ENCODE measurements at regions of chr13 and their contacts with region 1.

Region 1: GRCh38 chr13:51895906-51896888 is 34.4 kb downstream of the CCDC70 start:
- DNase-seq: peak; percentile 66
- H3K4me3 Mint-ChIP-seq: no peak overlapping the region
- H3K27ac Mint-ChIP-seq: no peak overlapping the region
- H3K4me1 Mint-ChIP-seq: no peaks in the 10 kb centered on the region
- H3K27me3 Mint-ChIP-seq: peaks cover 12% of the 10 kb centered on the region

Region 2: DNA sequence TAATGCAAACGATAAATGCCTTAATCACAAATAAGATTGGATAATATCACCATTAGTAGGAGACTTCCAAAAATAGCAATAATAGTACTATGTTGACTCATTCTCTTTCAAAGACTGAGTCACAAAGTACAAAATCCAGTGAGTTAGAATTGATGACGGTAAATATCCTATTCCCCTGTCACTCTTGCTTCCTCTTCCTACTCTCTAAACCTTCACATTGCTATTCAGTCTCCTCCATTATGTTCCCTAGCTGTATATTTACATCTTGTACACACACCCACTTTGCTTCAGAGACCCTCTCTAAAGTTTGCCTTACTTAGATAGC is 417.0 kb before region 1 on chr13:
- CTCF ChIA-PET with region 1: no interaction called
- POLR2A ChIA-PET with region 1: no interaction called
- intact Hi-C with region 1: no loop called
- DNase-seq: no peak
- H3K4me3 Mint-ChIP-seq: no peak overlapping the region
- H3K27ac Mint-ChIP-seq: no peak overlapping the region
- H3K4me1 Mint-ChIP-seq: peaks cover 5% of the 10 kb centered on the region
- H3K27me3 Mint-ChIP-seq: no peaks in the 10 kb centered on the region

Region 3: GRCh38 chr13:51923983-51924539 is 27.9 kb after region 1 on chr13:
- CTCF ChIA-PET with region 1: interaction called, 11 read pairs
- POLR2A ChIA-PET with region 1: no interaction called
- intact Hi-C with region 1: no loop called
- DNase-seq: peak; percentile 30
- H3K4me3 Mint-ChIP-seq: no peak overlapping the region
- H3K27ac Mint-ChIP-seq: no peak overlapping the region
- H3K4me1 Mint-ChIP-seq: peaks cover 21% of the 10 kb centered on the region
- H3K27me3 Mint-ChIP-seq: peaks cover 8% of the 10 kb centered on the region

Region 4: GRCh38 chr13:51978796-51979556 is 82.8 kb after region 1 on chr13:
- CTCF ChIA-PET with region 1: no interaction called
- POLR2A ChIA-PET with region 1: no interaction called
- intact Hi-C with region 1: no loop called
- DNase-seq: no peak
- H3K4me3 Mint-ChIP-seq: no peak overlapping the region
- H3K27ac Mint-ChIP-seq: no peak overlapping the region
- H3K4me1 Mint-ChIP-seq: no peaks in the 10 kb centered on the region
- H3K27me3 Mint-ChIP-seq: no peaks in the 10 kb centered on the region

Region 5: DNA sequence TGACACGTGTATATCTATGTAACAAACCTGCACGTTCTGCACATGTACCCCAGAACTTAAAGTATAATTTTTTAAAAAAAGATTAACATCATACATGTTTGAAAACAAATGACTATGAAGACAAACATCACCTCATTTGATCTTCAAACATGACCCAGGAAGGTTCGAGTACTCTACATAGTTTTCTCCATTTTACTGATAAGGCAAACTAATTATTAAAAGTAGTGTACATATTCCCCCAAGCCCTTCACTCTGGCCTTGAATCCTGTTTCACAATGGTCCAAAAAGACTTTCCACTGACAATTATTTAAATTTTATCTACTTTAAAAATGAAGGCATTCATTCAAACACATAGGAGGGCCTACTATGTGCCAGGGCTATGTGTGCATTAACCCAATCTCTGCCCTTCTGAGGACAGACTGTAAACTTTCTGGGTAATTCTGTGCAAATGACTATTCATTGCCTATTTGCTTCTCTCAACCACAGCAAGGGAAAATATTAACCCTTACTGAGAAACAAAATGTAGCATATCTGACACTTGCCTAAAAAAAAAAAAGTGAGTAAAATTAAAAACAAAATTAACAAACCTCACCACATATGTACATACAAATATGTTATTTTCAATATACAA is 92.9 kb after region 1 on chr13:
- CTCF ChIA-PET with region 1: no interaction called
- POLR2A ChIA-PET with region 1: no interaction called
- intact Hi-C with region 1: no loop called
- DNase-seq: no peak
- H3K4me3 Mint-ChIP-seq: no peak overlapping the region
- H3K27ac Mint-ChIP-seq: no peak overlapping the region
- H3K4me1 Mint-ChIP-seq: no peaks in the 10 kb centered on the region
- H3K27me3 Mint-ChIP-seq: peaks cover 6% of the 10 kb centered on the region

Region 6: DNA sequence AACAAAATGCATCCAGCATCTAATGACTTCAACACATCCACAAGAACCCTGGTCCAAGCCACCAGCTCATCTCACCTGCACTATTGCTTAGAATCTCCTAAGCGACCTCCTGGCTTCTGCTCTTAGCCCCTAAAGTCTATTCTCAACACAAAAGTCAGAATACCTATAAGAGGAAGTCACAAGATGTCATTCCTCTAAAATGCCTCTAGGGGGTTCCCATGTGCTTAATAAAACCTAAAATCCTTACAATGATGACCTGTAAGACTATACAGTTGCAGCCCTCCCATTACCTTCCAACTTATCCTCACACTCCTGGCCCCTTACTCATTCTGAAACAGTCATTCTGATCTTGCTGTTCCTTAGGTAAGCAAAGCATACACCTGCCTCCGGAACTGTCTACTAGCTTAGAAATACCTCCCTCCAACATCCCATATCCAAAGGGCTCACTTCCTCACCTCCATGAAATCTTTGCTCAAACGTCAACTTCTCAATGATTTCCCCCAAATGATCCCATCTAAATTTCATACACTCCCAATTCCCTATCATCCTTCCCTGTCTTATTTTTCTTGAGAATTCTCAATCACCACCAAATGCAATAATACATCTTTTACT is 105.0 kb after region 1 on chr13:
- CTCF ChIA-PET with region 1: no interaction called
- POLR2A ChIA-PET with region 1: no interaction called
- intact Hi-C with region 1: loop called (anchors 1 kb)
- DNase-seq: no peak
- H3K4me3 Mint-ChIP-seq: no peak overlapping the region
- H3K27ac Mint-ChIP-seq: no peak overlapping the region
- H3K4me1 Mint-ChIP-seq: no peaks in the 10 kb centered on the region
- H3K27me3 Mint-ChIP-seq: peaks cover 9% of the 10 kb centered on the region

Region 7: DNA sequence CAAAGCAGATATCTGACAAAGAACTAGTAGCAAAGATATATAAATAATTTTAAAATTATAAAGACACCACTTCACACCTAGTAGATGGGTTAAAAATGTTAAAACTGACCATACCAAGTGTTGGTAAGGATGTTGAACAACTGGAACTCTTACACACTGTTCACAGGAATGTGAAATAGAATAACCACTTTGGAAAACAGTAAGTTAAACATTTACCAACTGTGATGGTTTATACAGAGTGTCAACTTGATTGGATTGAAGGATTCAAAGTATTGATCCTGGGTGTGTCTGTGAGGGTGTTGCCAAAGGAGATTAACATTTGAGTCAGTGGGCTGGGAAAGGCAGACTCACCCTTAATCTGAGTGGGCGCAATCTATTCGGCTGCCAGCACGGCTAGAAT is 147.5 kb after region 1 on chr13:
- CTCF ChIA-PET with region 1: no interaction called
- POLR2A ChIA-PET with region 1: no interaction called
- intact Hi-C with region 1: no loop called
- DNase-seq: no peak
- H3K4me3 Mint-ChIP-seq: no peak overlapping the region
- H3K27ac Mint-ChIP-seq: no peak overlapping the region
- H3K4me1 Mint-ChIP-seq: no peaks in the 10 kb centered on the region
- H3K27me3 Mint-ChIP-seq: no peaks in the 10 kb centered on the region